Left colon (tissue), 2 donors: ENCODE measurements at regions of chr9 and their contacts with region 1.

Region 1: DNA sequence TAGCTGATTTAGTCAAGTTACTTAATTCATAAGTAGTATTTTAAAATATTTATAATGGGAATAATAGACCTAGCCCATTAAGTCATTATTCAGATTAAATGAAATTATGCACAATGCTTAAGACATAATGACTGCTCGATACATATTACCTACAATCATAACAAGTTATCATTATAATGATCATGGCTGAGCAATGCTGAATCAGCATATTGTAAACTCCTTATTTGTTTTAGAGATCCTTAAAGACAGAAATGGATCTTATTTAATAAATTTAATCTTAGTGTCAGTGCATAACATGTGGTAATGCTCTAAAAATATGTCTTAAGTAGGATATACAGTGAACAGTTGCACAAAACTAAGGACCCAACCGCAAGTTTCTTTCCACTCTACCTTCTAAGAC is 169.0 kb downstream of the TRPM6 start:
- DNase-seq: no peak
- ATAC-seq: no peak

Region 2: DNA sequence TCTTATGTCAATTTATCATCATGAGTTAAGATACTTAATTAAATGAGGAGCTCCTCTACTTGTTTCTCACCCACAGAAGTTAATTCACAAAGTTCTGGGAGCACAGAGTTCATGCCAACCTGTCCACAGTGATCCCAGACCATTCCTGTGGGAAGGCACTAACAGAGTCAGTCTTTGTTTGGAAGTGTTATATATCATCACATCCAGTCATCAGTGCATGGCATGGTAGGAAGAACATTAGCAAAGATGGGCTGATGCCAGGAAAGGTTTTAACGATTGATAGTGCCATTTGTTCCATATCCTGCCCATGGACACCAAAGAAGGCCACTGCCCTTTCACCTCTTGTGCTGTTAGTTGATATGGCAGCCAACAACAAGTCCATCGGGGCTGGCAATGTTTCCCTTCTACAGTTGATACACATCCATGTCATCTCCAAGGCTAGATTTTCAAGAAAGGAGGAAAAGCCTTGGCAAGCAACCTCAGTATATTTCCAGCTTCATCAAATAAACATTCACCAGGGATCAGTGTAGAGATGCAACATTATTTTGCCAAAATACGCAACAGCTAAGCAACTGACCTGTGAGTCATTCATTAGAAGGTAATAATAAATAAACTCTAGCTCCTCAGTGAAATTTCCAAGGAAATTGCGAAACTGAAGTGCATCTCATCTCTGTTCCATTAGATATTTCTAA is 51.9 kb before region 1 on chr9:
- intact Hi-C with region 1: loop called in 1 of 2 experiments (anchors 5 kb)
- DNase-seq: no peak
- ATAC-seq: no peak

Region 3: GRCh38 chr9:75185585-75186170 is 467.0 kb after region 1 on chr9:
- intact Hi-C with region 1: no loop called
- DNase-seq: peak; percentile 41 to 53
- ATAC-seq: peak; percentile 89